Activated B cell treated with CpG ODN at 0.5 μM for 24 hours (primary cell): ENCODE measurements at regions of chr6 and their contacts with region 1.

Region 1: GRCh38 chr6:37029249-37029971 is 24.0 kb downstream of the FGD2 start:
- DNase-seq: no peak
- ATAC-seq: peak; percentile 63
- H3K4me3 Mint-ChIP-seq: no peak overlapping the region
- H3K27ac Mint-ChIP-seq: peak overlapping the region; percentile 68
- H3K4me1 Mint-ChIP-seq: peaks cover 50% of the 10 kb centered on the region
- H3K27me3 Mint-ChIP-seq: no peaks in the 10 kb centered on the region
- CTCF ChIP-seq: no peak

Region 2: GRCh38 chr6:37131104-37131959 is 101.9 kb after region 1 on chr6:
- CTCF ChIA-PET with region 1: no interaction called
- POLR2A ChIA-PET with region 1: interaction called, 11 read pairs
- intact Hi-C with region 1: no loop called
- DNase-seq: no peak
- ATAC-seq: no peak
- H3K4me3 Mint-ChIP-seq: no peak overlapping the region
- H3K27ac Mint-ChIP-seq: no peak overlapping the region
- H3K4me1 Mint-ChIP-seq: peaks cover 12% of the 10 kb centered on the region
- H3K27me3 Mint-ChIP-seq: no peaks in the 10 kb centered on the region
- CTCF ChIP-seq: no peak

Region 3: GRCh38 chr6:37177077-37177934 is 147.9 kb after region 1 on chr6:
- CTCF ChIA-PET with region 1: interaction called, 65 read pairs
- POLR2A ChIA-PET with region 1: interaction called, 438 read pairs
- intact Hi-C with region 1: loop called (anchors 1 kb)
- DNase-seq: no peak
- ATAC-seq: peak; percentile 37
- H3K4me3 Mint-ChIP-seq: peak overlapping the region; percentile 65
- H3K27ac Mint-ChIP-seq: peak overlapping the region; percentile 90
- H3K4me1 Mint-ChIP-seq: peaks cover 62% of the 10 kb centered on the region
- H3K27me3 Mint-ChIP-seq: no peaks in the 10 kb centered on the region
- CTCF ChIP-seq: no peak

Region 4: GRCh38 chr6:37207903-37208456 is 178.6 kb after region 1 on chr6:
- CTCF ChIA-PET with region 1: interaction called, 185 read pairs
- POLR2A ChIA-PET with region 1: interaction called, 28 read pairs
- intact Hi-C with region 1: loop called (anchors 1 kb)
- DNase-seq: peak; percentile 79
- ATAC-seq: peak; percentile 97
- H3K4me3 Mint-ChIP-seq: no peak overlapping the region
- H3K27ac Mint-ChIP-seq: peak overlapping the region; percentile 5
- H3K4me1 Mint-ChIP-seq: peaks cover 20% of the 10 kb centered on the region
- H3K27me3 Mint-ChIP-seq: no peaks in the 10 kb centered on the region
- CTCF ChIP-seq: no peak